CD8-positive, alpha-beta T cell (primary cell): ENCODE measurements at regions of chr12 and their contacts with region 1.

Region 1: DNA sequence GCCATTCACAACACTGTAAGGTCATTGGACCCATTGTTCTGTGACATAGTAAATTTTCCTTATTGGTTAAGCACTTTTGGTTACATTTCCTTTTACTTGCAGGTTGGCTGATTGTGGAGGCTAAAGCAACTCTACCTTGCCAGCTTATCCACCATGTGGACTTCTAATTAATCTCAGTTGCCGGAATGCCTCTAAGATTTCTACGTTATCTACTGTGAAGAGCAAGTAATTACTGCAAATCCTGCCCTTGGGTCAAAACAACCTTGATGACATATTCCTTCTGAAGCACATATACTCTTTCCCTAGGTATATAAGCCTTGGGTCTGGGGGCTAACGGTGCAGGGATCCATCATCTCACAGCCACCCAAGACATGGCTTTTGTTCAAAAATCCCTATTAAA is 19.5 kb upstream of the MORN3 start:
- DNase-seq: no peak
- ATAC-seq: no peak
- H3K4me3 ChIP-seq: no peak overlapping the region
- H3K4me3 Mint-ChIP-seq: no peak overlapping the region
- H3K27ac ChIP-seq: no peak overlapping the region
- H3K27ac Mint-ChIP-seq: no peak overlapping the region
- H3K4me1 ChIP-seq: peaks cover 5% of the 10 kb centered on the region
- H3K4me1 Mint-ChIP-seq: peaks cover 8% of the 10 kb centered on the region
- H3K27me3 ChIP-seq: no peaks in the 10 kb centered on the region
- H3K27me3 Mint-ChIP-seq: no peaks in the 10 kb centered on the region
- CTCF ChIP-seq: no peak

Region 2: DNA sequence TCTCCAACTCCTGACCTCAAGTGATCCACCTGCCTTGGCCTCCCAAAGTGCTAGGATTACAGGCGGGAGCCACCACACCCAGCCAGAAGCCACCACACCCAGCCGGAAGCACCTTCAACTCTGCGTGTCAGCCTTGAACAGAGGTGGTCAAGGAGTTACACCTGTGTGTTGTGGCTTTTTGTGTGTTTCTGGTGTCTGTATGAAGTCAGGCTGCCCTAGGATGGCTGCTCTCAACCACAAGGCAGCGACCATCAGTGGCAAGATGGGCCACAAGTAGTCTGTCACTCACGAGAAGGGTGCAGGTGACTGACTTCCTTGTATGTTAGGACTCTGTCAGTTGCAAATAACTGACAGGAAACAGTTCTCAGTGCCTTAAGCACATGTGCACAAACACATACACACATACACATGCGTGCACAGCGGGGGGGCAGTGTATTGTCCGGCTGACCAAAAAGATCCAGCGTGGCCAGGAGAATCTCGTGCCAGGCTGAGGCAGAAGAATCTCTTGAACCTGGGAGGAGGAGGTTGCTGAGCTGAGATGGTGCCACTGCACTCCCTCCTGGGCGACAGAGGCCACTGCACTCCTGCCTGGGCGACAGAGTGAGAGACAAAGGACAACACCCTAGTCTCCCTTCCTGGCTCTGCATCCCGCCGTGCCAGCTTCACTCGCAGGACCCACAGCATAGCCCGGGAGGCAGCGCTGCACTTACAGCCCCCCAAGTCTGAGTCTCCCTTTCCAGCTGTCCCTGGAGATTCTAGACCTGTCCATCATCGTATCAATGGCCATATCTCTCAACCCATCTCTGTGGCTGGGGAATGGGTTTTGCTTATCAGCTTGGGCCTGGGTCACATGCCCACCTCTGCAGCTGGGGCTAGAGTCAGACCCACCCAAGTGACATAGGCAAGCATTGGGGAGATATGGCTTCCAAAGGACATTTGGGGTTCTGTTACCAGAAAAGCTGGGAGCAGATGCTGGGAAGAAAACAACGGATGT is 465.4 kb before region 1 on chr12:
- CTCF ChIA-PET with region 1: no interaction called
- POLR2A ChIA-PET with region 1: no interaction called
- intact Hi-C with region 1: no loop called
- DNase-seq: peak in 6 of 9 experiments; percentile 32 to 72 (median 46)
- ATAC-seq: peak; percentile 58
- H3K4me3 ChIP-seq: no peak overlapping the region
- H3K4me3 Mint-ChIP-seq: peak overlapping the region; percentile 46
- H3K27ac ChIP-seq: peak overlapping the region; percentile 35 to 69
- H3K27ac Mint-ChIP-seq: peak overlapping the region; percentile 95
- H3K4me1 ChIP-seq: peaks cover 41% of the 10 kb centered on the region
- H3K4me1 Mint-ChIP-seq: peaks cover 43% of the 10 kb centered on the region
- H3K27me3 ChIP-seq: no peaks in the 10 kb centered on the region
- H3K27me3 Mint-ChIP-seq: no peaks in the 10 kb centered on the region
- CTCF ChIP-seq: peak; percentile 34

Region 3: DNA sequence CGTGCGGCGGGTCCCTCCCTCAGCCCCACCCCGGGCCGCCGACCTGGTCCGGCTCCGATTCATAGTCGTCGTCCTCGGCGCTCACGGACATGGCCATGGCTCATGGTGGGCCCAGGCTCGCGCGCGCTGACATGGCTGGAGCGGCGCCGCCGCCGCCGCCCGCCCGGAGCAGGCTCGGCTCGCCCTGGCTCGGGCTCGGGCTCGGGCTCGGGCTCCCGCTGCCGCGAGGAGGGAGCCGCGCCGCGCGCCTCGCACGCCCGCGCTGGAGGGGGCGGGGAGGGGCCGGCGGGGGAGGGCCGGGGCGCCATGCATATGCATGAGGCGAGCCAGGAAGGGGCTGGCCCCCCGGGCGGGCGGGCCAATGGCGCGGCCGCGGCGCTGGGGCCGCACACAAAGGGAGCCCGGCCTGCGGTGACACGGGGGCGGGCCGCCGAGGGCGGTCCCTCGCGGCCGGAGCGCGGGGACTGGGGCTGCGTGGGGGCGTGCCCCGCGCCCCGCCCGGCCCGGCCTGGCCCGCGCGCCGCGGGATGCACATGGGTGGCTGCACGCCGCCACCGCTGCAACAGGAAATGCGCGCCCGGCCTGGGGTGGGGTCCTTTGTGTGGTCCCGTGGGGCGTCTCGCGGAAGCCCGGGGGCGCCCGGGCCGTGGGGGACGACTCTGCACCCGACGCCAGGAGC is 221.7 kb before region 1 on chr12:
- CTCF ChIA-PET with region 1: no interaction called
- POLR2A ChIA-PET with region 1: no interaction called
- intact Hi-C with region 1: loop called in 1 of 2 experiments (anchors 1 kb)
- DNase-seq: peak; percentile 77 to 94 (median 86)
- ATAC-seq: peak; percentile 85
- H3K4me3 ChIP-seq: peak overlapping the region; percentile 49 to 55
- H3K4me3 Mint-ChIP-seq: peak overlapping the region; percentile 68
- H3K27ac ChIP-seq: peak overlapping the region; percentile 44 to 59
- H3K27ac Mint-ChIP-seq: no peak overlapping the region
- H3K4me1 ChIP-seq: peaks cover 26% of the 10 kb centered on the region
- H3K4me1 Mint-ChIP-seq: peaks cover 37% of the 10 kb centered on the region
- H3K27me3 ChIP-seq: no peaks in the 10 kb centered on the region
- H3K27me3 Mint-ChIP-seq: no peaks in the 10 kb centered on the region
- CTCF ChIP-seq: no peak

Region 4: DNA sequence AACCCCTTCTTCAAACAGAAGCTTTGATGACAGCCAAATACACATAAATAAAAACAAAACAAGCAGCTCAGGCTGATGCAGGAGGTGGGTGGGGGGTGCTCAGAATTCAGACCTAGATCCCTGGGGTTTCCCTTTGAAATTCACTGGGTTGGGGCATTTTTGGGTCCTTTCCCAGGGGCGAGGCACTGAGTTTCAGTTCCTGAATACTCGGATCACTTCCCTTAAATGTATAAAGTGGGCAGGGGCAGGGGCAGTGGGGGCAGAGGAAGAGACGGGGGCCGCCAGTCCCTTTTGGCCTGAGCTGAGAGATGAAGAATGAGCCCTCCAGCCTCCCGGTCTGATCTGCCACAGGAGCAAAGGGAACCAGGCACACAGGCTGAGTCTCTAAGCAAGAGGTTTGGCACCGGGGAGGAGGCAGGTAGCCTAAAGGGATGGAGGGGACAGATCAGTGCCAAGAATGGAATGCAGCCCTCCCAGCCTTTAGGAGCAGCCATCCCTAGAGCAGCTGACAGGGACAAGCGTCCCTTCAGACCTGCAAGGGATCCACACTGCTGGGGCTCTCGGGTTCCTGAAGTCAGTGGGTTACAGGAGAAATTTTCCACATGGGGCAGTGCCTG is 128.5 kb before region 1 on chr12:
- CTCF ChIA-PET with region 1: no interaction called
- POLR2A ChIA-PET with region 1: no interaction called
- intact Hi-C with region 1: no loop called
- DNase-seq: peak in 1 of 9 experiments; percentile 46
- ATAC-seq: no peak
- H3K4me3 ChIP-seq: no peak overlapping the region
- H3K4me3 Mint-ChIP-seq: no peak overlapping the region
- H3K27ac ChIP-seq: no peak overlapping the region
- H3K27ac Mint-ChIP-seq: no peak overlapping the region
- H3K4me1 ChIP-seq: no peaks in the 10 kb centered on the region
- H3K4me1 Mint-ChIP-seq: peaks cover 14% of the 10 kb centered on the region
- H3K27me3 ChIP-seq: no peaks in the 10 kb centered on the region
- H3K27me3 Mint-ChIP-seq: no peaks in the 10 kb centered on the region
- CTCF ChIP-seq: no peak

Region 5: GRCh38 chr12:121590476-121591143 is 98.4 kb before region 1 on chr12:
- CTCF ChIA-PET with region 1: interaction called, 3 read pairs
- POLR2A ChIA-PET with region 1: interaction called, 5 read pairs
- intact Hi-C with region 1: loop called in 1 of 2 experiments (anchors 1 kb)
- DNase-seq: peak in 8 of 9 experiments; percentile 37 to 92 (median 75)
- ATAC-seq: peak; percentile 75
- H3K4me3 ChIP-seq: peak overlapping the region; percentile 44 to 57
- H3K4me3 Mint-ChIP-seq: peak overlapping the region; percentile 89
- H3K27ac ChIP-seq: peak overlapping the region; percentile 95 to 96
- H3K27ac Mint-ChIP-seq: peak overlapping the region; percentile 100
- H3K4me1 ChIP-seq: peaks cover 30% of the 10 kb centered on the region
- H3K4me1 Mint-ChIP-seq: peaks cover 33% of the 10 kb centered on the region
- H3K27me3 ChIP-seq: no peaks in the 10 kb centered on the region
- H3K27me3 Mint-ChIP-seq: no peaks in the 10 kb centered on the region
- CTCF ChIP-seq: no peak

Region 6: DNA sequence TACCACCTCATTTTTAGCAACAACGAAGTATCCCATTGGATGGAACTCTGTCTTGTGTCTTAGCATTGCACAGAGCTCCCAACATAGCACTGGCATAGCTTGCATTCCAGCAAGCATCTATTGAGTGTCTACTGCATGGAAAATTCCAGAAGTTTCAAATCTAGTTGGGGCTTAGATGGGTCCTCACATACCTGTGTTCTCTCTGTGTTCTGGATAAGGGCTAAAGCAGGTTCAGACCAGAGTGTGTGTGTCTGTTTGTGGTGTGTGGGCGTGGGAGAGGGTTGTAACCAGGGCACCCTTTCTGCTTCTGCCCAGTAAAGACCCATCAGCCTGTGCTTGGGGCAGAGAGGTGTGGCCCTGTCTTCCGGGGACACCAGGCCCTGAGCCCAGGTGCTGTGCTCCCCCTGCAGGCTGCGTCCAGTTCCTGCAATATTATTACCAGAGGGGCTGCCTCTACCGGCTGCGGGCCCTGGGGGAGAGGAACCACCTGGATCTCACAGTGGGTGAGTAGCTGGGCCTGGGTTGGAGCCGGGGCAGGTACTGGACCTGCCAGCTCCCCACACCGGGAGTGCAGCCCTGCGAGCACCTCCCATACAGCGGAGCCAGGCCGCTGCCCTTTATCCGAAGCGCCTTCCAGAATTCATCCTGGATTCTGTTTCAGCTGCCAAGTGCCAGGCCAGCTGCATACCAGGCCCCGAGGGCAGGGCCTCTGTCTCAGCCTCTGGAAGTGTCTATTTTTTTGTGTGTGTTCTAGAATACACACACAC is 84.2 kb after region 1 on chr12:
- CTCF ChIA-PET with region 1: interaction called, 148 read pairs
- POLR2A ChIA-PET with region 1: no interaction called
- intact Hi-C with region 1: no loop called
- DNase-seq: peak; percentile 63 to 88 (median 80)
- ATAC-seq: peak; percentile 90
- H3K4me3 ChIP-seq: no peak overlapping the region
- H3K4me3 Mint-ChIP-seq: no peak overlapping the region
- H3K27ac ChIP-seq: peak overlapping the region in 1 of 2 experiments; percentile 32
- H3K27ac Mint-ChIP-seq: peak overlapping the region; percentile 57
- H3K4me1 ChIP-seq: peaks cover 29% of the 10 kb centered on the region
- H3K4me1 Mint-ChIP-seq: peaks cover 16% of the 10 kb centered on the region
- H3K27me3 ChIP-seq: no peaks in the 10 kb centered on the region
- H3K27me3 Mint-ChIP-seq: no peaks in the 10 kb centered on the region
- CTCF ChIP-seq: peak; percentile 82

Region 7: DNA sequence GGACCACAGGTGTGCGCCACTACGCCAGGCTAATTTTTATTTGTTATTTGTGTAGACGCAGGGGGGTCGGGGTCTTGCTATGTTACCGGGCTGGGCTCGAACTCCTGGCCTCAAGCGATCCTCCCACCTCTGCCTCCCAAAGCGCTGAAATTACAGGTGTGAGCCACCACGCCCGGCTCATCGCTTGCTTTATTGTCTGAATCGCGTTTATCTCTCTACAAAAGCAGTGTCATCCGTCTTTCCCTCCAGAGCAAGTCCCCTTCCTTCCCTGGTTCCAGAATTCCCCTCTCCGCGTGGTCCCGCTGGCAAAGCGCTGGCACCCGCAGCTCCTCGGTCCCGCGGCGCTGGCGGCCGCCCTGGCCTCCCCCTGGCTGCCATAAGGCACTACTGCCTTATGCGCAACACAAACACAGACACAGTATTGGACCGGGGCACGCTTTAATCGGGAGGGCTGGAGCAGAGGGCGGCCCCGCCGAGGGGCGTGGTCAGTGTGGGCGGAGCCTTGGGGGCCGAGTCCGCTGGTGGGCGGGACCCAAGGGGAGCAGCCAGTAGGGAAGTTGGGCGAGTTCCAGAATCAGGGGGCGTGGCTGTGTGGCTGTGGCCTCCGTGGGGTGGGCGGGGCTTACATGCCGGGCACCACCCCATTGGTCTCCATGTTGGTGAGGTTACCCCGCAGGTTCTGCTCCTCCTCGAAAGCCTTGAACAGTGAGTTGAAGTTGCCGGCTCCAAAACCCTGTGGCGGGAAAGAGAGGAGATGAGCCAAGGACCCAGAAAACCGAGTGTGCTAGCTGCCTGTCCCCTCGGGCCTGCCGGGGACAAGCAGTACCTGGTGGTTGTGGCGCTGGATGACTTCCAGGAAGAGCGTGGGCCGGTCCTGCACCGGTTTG is 150.4 kb after region 1 on chr12:
- CTCF ChIA-PET with region 1: no interaction called
- POLR2A ChIA-PET with region 1: no interaction called
- intact Hi-C with region 1: loop called in 1 of 2 experiments (anchors 1 kb)
- DNase-seq: peak; percentile 99 to 100 (median 100)
- ATAC-seq: peak; percentile 97
- H3K4me3 ChIP-seq: peak overlapping the region; percentile 73 to 95
- H3K4me3 Mint-ChIP-seq: peak overlapping the region; percentile 97
- H3K27ac ChIP-seq: peak overlapping the region; percentile 34 to 54
- H3K27ac Mint-ChIP-seq: peak overlapping the region; percentile 88
- H3K4me1 ChIP-seq: peaks cover 7% of the 10 kb centered on the region
- H3K4me1 Mint-ChIP-seq: peaks cover 13% of the 10 kb centered on the region
- H3K27me3 ChIP-seq: no peaks in the 10 kb centered on the region
- H3K27me3 Mint-ChIP-seq: no peaks in the 10 kb centered on the region
- CTCF ChIP-seq: peak; percentile 27